ENCODE measurements at regions of chr6 and their contacts with region 1.

Region 1: GRCh38 chr6:70304616-70305015 is 1.7 kb upstream of the COL9A1 start:
- DNase-seq: no peak
- H3K4me3 ChIP-seq: no peak overlapping the region
- H3K4me3 Mint-ChIP-seq: no peak overlapping the region
- H3K27ac ChIP-seq: no peak overlapping the region
- H3K27ac Mint-ChIP-seq: no peak overlapping the region
- H3K4me1 ChIP-seq: no peaks in the 10 kb centered on the region
- H3K4me1 Mint-ChIP-seq: no peaks in the 10 kb centered on the region
- H3K27me3 ChIP-seq: no peaks in the 10 kb centered on the region
- H3K27me3 Mint-ChIP-seq: peaks cover 23 to 31% of the 10 kb centered on the region in 2 donors

Region 2: GRCh38 chr6:70327036-70327435 is 22.4 kb after region 1 on chr6:
- CTCF ChIA-PET with region 1: interaction called, 7 read pairs
- POLR2A ChIA-PET with region 1: no interaction called
- intact Hi-C with region 1: loop called (anchors 1 kb)
- DNase-seq: no peak
- H3K4me3 ChIP-seq: no peak overlapping the region
- H3K4me3 Mint-ChIP-seq: no peak overlapping the region
- H3K27ac ChIP-seq: no peak overlapping the region
- H3K27ac Mint-ChIP-seq: no peak overlapping the region
- H3K4me1 ChIP-seq: no peaks in the 10 kb centered on the region
- H3K4me1 Mint-ChIP-seq: peaks cover 0 to 1% (median 0%) of the 10 kb centered on the region in 4 donors
- H3K27me3 ChIP-seq: no peaks in the 10 kb centered on the region
- H3K27me3 Mint-ChIP-seq: no peaks in the 10 kb centered on the region

Measured in CD4-positive, alpha-beta memory T cell (primary cell).